OCI-LY7 (cell line): ENCODE measurements at regions of chrX and their contacts with region 1.

Region 1: GRCh38 chrX:15815779-15816437 is 25.6 kb downstream of the ZRSR2 start:
- DNase-seq: peak; percentile 31
- H3K4me3 ChIP-seq: no peak overlapping the region
- H3K27ac ChIP-seq: no peak overlapping the region
- H3K4me1 ChIP-seq: no peaks in the 10 kb centered on the region
- CTCF ChIP-seq: peak; percentile 49; the same call in 1 of the 2 replicates

Region 2: DNA sequence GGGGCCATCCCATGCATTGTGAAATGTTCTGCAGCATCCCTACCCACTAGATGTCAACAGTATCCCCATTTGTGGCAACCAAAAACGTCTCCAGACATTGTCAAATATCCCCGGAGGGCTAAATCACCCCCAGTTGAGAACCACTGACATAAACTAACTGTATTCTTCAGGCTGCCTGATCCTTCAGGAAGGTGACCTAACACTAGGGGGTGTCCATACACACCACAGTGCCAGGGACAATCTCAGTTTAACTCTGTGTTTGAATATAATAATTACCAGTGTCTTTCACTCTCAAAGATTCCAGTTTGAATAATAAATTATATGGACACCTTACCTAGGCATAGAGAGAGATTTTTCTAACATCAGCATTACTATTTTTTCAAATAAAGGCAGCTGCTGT is 221.5 kb before region 1 on chrX:
- CTCF ChIA-PET with region 1: no interaction called
- POLR2A ChIA-PET with region 1: no interaction called
- intact Hi-C with region 1: no loop called
- DNase-seq: no peak
- H3K4me3 ChIP-seq: no peak overlapping the region
- H3K27ac ChIP-seq: no peak overlapping the region
- H3K4me1 ChIP-seq: no peaks in the 10 kb centered on the region
- CTCF ChIP-seq: 0 out of 2 replicates have a peak, but pooled peaks have one; percentile 17

Region 3: GRCh38 chrX:15973299-15973698 is 157.4 kb after region 1 on chrX:
- CTCF ChIA-PET with region 1: no interaction called
- POLR2A ChIA-PET with region 1: no interaction called
- intact Hi-C with region 1: loop called (anchors 10 kb)
- DNase-seq: peak; percentile 56
- H3K4me3 ChIP-seq: no peak overlapping the region
- H3K27ac ChIP-seq: no peak overlapping the region
- H3K4me1 ChIP-seq: no peaks in the 10 kb centered on the region
- CTCF ChIP-seq: peak; percentile 67